AG04449 (cell line): ENCODE measurements at regions of chr10 and their contacts with region 1.

Region 1: GRCh38 chr10:102917962-102918816 is at the start of gene CNNM2:
- DNase-seq: peak; percentile 97
- H3K4me3 ChIP-seq: peak within 1 kb of the TSS; percentile 99
- CTCF ChIP-seq: no peak

Region 2: DNA sequence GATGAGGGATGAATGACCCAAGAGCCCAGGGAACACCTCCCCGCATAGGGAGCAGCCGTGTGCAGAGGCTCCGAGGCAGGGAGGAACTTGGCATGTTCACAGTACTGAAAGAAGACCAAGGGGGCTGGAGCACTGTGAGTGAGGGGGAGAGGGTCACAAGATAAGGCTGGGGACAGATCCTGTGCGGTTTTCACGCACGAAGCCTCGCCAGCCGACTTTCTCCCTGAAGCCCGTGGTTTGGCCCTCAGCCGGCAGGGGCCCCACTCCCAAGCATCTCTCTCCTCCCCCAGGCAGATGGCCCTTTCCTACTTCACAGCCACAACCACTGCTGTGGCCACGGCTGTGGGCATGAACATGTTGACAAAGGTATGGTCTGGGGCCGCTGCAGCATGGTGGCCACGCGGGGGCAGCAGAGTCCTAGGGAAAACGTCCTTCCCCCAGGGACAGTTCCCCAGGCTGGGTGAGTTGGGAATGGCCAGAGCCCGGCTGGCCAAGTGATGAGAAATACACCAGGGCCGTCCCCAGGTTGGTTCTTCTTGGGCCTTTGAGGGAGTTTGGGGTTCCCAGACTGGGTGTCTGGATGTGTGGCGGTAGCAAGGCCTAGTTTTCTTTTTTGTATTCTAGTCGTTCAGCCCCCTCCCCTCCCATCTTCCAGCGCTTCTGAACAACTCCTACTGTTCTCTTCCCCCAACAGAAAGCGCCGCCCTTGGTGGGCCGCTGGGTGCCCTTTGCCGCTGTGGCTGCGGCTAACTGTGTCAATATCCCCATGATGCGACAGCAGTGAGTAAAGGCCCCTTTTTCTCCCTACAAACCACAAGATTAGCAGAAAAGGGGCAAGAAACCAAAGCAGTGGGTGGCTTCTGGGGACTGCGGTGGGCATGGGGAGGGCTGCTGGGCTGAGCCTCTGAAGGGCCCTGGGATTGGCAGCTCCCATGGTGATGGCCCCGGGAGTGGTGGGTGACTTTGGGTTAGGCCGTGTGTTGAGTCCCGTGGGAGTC is 188.9 kb before region 1 on chr10:
- CTCF ChIA-PET with region 1: interaction called, 11 read pairs
- POLR2A ChIA-PET with region 1: no interaction called
- DNase-seq: no peak
- H3K4me3 ChIP-seq: no peak overlapping the region
- CTCF ChIP-seq: peak; percentile 95

Region 3: GRCh38 chr10:103044942-103045489 is 126.8 kb after region 1 on chr10:
- CTCF ChIA-PET with region 1: interaction called, 14 read pairs
- POLR2A ChIA-PET with region 1: interaction called, 4 read pairs
- DNase-seq: peak; percentile 89
- H3K4me3 ChIP-seq: no peak overlapping the region
- CTCF ChIP-seq: no peak

Region 4: DNA sequence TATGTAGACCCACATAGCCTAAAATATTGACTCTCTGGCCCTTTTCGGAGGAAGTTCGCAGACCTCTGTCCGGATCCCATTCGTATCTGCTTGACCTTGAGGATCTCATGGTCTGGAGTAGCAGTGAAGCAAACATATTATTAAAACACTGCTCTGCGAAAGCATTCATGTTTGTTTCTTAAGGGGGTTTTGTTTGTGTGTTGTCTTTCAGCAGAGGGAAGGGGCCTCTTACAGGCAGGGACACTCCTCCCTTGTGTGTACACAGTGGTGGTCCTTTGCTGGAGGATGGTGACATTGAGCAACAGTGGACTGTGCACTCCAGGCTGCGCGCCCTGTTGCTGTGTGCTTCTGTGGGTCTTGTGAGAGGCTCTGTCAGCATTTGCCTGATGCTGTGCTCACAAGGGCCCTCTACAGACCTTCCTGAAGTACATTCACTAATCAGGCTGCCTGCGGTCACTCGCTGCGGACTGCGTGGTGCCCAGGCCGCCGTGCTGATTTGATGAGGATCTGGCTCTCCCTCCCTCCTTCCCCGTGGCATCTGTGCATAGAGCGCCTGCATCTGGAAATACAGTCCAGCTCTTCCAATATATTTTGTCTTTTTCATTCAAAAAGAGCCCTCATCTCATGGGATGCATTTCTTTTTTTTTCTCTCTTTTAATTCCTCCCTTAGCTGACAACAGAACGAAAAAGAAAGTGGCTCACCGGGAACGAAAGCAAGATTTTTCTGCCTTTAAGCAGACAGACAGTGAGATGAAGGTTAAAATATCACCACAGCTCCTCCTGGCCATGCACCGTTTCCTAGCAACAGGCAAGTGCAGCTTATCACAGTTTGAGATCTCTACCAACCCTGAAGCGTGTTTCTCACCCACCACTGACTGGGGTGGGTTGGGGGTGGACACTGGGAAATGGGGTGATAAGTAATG is 135.7 kb after region 1 on chr10:
- CTCF ChIA-PET with region 1: interaction called, 22 read pairs
- POLR2A ChIA-PET with region 1: no interaction called
- DNase-seq: peak; percentile 33
- H3K4me3 ChIP-seq: peak overlapping the region; percentile 51
- CTCF ChIP-seq: peak; percentile 66

Region 5: GRCh38 chr10:103069453-103070331 is 151.5 kb after region 1 on chr10:
- CTCF ChIA-PET with region 1: interaction called, 475 read pairs
- POLR2A ChIA-PET with region 1: interaction called, 4 read pairs
- DNase-seq: no peak
- H3K4me3 ChIP-seq: no peak overlapping the region
- CTCF ChIP-seq: peak; percentile 54

Region 6: GRCh38 chr10:103102195-103102594 is 184.0 kb after region 1 on chr10:
- CTCF ChIA-PET with region 1: interaction called, 12 read pairs
- POLR2A ChIA-PET with region 1: no interaction called
- DNase-seq: no peak
- H3K4me3 ChIP-seq: no peak overlapping the region
- CTCF ChIP-seq: no peak